Prostate gland (tissue), 2 donors: ENCODE measurements at regions of chr11 and their contacts with region 1.

Region 1: DNA sequence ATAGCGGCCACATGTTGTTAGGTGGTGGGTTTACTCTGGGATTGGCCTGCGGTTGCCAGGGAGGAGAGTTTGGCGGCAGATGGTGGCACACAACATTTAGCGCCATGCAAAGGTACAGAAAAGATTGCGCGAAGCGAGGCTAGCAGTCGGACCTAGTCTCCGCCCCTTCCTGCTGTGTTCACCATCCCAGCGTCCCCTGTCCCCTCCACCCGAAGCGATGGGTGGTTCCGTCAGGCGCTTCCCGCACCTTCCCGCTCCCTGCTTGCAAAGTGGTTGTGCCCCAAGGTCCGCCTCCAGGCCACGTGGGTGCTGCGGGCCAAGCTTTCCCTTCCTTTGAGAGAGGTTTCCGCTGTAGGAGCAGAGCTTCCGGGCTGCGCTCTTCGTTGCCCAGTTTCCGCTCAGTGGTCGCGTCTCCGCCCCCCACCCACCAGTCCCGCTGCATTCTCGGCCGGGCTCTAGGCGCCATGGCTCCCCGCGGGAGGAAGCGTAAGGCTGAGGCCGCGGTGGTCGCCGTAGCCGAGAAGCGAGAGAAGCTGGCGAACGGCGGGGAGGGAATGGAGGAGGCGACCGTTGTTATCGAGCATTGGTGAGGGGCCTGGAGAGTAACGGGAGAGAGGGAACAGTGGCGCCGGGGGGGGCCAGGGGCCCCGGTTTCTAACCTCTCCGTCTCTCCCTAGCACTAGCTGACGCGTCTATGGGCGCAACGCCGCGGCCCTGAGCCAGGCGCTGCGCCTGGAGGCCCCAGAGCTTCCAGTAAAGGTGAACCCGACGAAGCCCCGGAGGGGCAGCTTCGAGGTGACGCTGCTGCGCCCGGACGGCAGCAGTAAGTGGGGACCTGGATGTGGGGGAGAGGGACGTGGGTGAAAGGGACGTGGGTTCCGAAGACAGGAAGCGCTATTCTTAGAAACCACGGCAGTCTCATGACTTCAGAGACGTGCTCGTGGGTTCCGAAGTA is at the start of gene SELENOH:
- DNase-seq: peak; percentile 96
- H3K4me3 ChIP-seq: peak within 1 kb of the TSS; percentile 60 to 63
- H3K27ac ChIP-seq: peak within 1 kb of the TSS; percentile 85 to 86
- H3K4me1 ChIP-seq: no peaks in the 10 kb centered on the region
- H3K27me3 ChIP-seq: no peaks in the 10 kb centered on the region
- CTCF ChIP-seq: peak in 2 of 4 experiments; percentile 4 to 13
- POLR2A ChIP-seq: peak; percentile 82
- total RNA-seq, gene SELENOH: 181 to 334 TPM

Region 2: DNA sequence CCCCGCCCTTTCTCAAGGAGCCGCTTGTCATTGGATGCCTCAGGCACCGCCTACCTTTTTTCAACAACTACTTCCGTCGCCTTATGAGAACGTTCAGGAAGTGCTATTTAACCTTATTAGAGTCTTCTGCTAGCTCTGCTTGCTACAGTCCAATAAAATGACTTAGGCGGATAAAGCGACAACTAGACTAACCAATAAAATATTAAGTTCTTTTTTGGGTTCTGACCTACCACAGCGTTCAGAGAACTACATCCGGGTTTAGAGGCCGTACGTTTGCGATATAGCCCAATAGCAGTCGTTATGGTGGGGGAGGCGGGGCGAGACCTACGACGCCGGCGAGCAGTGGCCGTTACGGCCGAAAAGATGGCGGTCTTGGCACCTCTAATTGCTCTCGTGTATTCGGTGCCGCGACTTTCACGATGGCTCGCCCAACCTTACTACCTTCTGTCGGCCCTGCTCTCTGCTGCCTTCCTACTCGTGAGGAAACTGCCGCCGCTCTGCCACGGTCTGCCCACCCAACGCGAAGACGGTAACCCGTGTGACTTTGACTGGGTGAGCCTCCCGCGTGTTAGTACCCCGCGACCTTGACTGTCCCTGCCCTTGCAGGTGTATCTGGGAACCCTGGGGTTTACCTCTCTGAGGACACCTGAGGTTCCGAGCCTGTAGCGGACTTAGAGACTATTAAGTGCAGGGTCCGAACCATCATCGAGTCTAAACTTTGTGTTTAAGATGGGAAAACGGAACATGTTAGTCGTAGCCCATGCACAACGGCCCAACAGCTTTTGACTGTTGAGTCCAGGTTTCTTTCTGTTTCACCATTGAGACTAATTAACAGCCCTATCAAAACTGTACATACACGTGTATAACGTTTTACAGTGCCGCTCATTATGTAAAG is 28.9 kb before region 1 on chr11 and contains the start of gene TMX2:
- intact Hi-C with region 1: loop called (anchors 2 kb)
- DNase-seq: peak; percentile 95
- H3K4me3 ChIP-seq: peak within 1 kb of the TSS; percentile 81 to 96
- H3K27ac ChIP-seq: peak within 1 kb of the TSS; percentile 89 to 93
- H3K4me1 ChIP-seq: peaks cover 2% of the 10 kb centered on the region
- H3K27me3 ChIP-seq: no peaks in the 10 kb centered on the region
- CTCF ChIP-seq: no peak
- POLR2A ChIP-seq: no peak
- total RNA-seq, gene TMX2: 80.8 to 84.4 TPM

Region 3: DNA sequence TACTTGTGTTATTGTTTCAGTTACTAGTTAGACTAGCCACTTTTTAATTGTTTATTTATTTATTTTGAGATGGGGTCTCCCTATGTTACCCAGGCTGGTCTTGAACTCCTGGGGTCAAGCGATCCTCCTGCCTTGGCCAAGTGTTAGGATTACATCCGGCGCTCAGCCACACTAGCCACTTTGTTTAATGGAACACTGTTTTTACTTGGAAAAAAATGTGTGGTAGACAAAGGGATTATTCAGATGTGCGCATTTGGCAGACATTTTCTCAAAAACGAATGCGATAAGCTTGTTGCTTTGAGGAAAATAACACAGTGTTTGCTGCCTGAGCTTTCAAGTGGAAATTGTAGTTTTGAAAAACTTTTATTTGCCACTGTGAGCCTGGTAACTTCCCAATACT is 71.2 kb after region 1 on chr11:
- intact Hi-C with region 1: no loop called
- DNase-seq: no peak
- H3K4me3 ChIP-seq: no peak overlapping the region
- H3K27ac ChIP-seq: no peak overlapping the region
- H3K4me1 ChIP-seq: no peaks in the 10 kb centered on the region
- H3K27me3 ChIP-seq: no peaks in the 10 kb centered on the region
- CTCF ChIP-seq: no peak
- POLR2A ChIP-seq: no peak